Endothelial cell of umbilical vein (primary cell): ENCODE measurements at regions of chr22 and their contacts with region 1.

Region 1: DNA sequence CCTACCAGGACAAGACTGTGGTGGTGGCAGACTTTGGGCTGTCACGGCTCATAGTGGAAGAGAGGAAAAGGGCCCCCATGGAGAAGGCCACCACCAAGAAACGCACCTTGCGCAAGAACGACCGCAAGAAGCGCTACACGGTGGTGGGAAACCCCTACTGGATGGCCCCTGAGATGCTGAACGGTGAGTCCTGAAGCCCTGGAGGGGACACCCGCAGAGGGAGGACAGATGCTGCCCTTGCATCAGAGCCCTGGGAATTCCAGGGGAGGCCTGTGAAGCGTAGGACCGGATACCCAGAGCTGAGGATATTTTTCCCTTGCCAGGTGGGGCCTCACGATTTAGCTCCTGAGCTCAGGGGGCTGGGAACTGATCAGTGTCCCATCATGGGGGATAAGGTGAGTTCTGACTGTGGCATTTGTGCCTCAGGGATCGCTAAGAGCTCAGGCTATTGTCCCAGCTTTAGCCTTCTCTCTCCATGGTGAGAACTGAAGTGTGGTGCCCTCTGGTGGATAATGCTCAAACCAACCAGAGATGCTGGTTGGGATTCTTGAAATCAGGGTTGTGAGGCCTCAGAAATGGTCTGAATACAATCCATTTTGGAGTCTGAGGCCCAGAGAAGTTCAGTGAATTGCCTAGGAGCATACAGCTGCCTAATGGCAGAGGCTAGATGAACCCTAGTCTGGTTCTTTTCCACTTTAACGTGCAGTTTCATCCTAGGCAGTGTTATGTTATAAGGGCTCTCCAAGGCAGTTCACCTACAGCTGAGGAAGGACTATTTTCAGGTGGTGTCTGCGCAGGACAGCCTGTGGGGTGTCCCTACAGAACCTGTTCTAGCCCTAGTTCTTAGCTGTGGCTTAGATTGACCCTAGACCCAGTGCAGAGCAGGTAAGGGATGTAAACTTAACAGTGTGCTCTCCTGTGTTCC is 19.5 kb downstream of the PIK3IP1 start:
- DNase-seq: peak; percentile 67
- H3K4me3 ChIP-seq: no peak overlapping the region
- H3K27ac ChIP-seq: no peak overlapping the region
- H3K4me1 ChIP-seq: no peaks in the 10 kb centered on the region
- H3K27me3 ChIP-seq: no peaks in the 10 kb centered on the region
- CTCF ChIP-seq: peak; percentile 66 to 69
- POLR2A ChIP-seq: no peak

Region 2: DNA sequence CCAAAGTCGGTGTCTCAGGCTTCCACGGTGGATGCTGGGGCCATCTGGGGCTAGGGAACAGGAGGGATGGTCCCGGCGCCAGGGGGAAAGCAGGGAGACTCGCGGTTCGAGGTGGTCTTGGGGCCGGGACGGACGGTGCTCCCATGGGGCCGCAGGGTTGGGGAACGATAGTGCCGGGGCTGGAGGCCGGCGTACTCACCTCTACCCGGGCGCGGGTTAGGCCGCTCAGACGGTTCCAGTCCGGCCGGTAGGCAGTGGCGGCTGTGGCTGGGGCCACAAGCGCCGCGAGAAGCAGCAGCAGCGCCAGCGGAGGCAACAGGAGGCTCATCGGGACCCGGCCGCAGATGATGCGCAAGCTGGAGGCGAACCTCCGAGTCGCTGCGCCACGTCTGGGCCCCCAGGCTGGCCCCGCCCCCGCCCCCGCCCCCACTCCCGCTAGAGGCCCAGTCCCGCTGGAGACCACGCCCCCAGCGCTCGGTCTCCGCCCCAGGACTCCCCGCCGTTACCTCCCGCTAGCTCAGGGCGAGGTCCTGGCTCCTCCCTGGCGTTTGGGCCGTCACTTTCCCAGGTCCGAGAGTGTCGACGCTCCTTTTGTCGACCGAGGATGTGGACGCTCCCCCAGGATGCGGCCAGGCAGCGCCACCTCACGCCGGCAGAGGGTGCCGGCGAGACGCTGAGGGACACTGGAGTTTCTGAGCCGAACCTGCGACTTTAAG is 165.4 kb before region 1 on chr22 and contains the start of gene SELENOM:
- CTCF ChIA-PET with region 1: interaction called, 53 read pairs
- POLR2A ChIA-PET with region 1: no interaction called
- dilution Hi-C with region 1: no loop called
- intact Hi-C with region 1: loop called (anchors 1 kb)
- DNase-seq: peak; percentile 98
- H3K4me3 ChIP-seq: peak within 1 kb of the TSS; percentile 10 to 85 (median 60)
- H3K27ac ChIP-seq: peak within 1 kb of the TSS; percentile 64
- H3K4me1 ChIP-seq: peaks cover 11% of the 10 kb centered on the region
- H3K27me3 ChIP-seq: no peaks in the 10 kb centered on the region
- CTCF ChIP-seq: peak; percentile 97 to 99
- POLR2A ChIP-seq: peak; percentile 71
- total RNA-seq, gene SELENOM: 29.6 TPM in 2 replicates

Region 3: DNA sequence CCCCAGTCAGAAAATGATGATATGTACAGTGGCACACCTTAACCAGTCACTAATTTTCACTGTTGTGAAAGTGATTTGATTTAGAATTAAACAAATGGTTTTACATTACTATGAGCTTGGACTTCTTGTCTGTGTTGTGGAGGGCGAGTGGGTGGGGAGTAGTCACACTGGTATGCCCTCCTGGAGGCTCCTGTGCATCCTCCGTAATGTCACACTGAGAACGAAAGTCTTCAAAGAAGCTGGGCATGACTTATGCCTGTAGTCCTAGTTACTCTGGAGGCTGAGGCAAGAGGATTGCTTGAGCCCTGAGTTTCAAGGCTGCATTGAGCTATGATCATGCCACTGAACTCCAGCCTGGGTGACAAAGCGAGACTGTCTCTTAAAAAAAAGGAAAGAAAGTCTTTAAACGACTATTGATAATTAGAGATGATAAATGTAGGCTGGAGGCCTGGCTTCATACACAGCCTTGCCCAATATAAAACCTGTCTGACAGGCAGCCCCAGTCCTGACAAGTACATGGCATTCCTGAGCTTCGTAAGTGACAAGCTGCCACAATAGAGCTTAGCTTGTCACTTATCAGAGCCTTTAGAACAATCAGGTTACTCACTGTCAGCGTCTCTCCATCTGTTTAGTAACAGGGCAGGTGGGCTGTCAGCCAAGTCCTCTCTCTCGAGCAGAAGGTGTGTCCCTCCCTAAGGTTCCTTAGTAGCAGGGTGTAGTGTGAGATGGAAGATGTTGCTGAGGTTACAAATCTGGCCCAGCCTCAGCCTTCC is 65.7 kb before region 1 on chr22:
- CTCF ChIA-PET with region 1: interaction called, 66 read pairs
- POLR2A ChIA-PET with region 1: interaction called, 4 read pairs
- dilution Hi-C with region 1: no loop called
- intact Hi-C with region 1: loop called (anchors 1 kb)
- DNase-seq: no peak
- H3K4me3 ChIP-seq: no peak overlapping the region
- H3K27ac ChIP-seq: no peak overlapping the region
- H3K4me1 ChIP-seq: peaks cover 23% of the 10 kb centered on the region
- H3K27me3 ChIP-seq: no peaks in the 10 kb centered on the region
- CTCF ChIP-seq: no peak
- POLR2A ChIP-seq: no peak

Region 4: GRCh38 chr22:31230871-31231621 is 41.7 kb before region 1 on chr22:
- CTCF ChIA-PET with region 1: interaction called, 50 read pairs
- POLR2A ChIA-PET with region 1: no interaction called
- dilution Hi-C with region 1: no loop called
- intact Hi-C with region 1: loop called (anchors 2 kb)
- DNase-seq: peak; percentile 92
- H3K4me3 ChIP-seq: no peak overlapping the region
- H3K27ac ChIP-seq: peak overlapping the region; percentile 83
- H3K4me1 ChIP-seq: peaks cover 69% of the 10 kb centered on the region
- H3K27me3 ChIP-seq: no peaks in the 10 kb centered on the region
- CTCF ChIP-seq: peak; percentile 79 to 85
- POLR2A ChIP-seq: peak; percentile 42

Region 5: DNA sequence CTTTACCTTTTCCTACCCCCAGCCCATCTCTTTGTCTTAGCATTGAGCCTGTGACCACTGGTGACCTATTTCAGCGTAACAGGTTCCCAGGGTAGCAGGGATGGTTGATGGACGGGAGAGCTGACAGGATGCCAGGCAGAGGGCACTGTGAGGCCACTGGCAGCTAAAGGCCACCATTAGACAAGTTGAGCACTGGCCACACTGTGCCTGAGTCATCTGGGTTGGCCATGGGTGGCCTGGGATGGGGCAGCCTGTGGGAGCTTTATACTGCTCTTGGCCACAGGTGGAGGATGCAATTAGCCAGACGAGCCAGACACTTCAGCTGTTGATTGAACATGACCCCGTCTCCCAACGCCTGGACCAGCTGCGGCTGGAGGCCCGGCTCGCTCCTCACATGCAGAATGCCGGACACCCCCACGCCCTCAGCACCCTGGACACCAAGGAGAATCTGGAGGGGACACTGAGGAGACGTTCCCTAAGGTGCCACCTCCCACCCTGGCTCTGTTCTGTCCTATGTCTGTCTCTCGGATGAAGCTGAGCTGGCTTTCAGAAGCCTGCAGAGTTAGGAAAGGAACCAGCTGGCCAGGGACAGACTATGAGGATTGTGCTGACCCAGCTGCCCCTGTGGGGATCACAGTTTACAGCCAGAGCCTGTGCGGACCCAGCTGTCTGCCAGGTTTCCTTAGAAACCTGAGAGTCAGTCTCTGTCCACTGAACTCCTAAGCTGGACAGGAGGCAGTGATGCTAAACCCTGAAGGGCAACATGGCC is 10.3 kb before region 1 on chr22:
- CTCF ChIA-PET with region 1: interaction called, 40 read pairs
- POLR2A ChIA-PET with region 1: no interaction called
- dilution Hi-C with region 1: no loop called
- intact Hi-C with region 1: no loop called
- DNase-seq: no peak
- H3K4me3 ChIP-seq: no peak overlapping the region
- H3K27ac ChIP-seq: no peak overlapping the region
- H3K4me1 ChIP-seq: no peaks in the 10 kb centered on the region
- H3K27me3 ChIP-seq: no peaks in the 10 kb centered on the region
- CTCF ChIP-seq: no peak
- POLR2A ChIP-seq: no peak

Region 6: GRCh38 chr22:31295831-31296657 is 23.3 kb after region 1 on chr22:
- CTCF ChIA-PET with region 1: interaction called, 33 read pairs
- POLR2A ChIA-PET with region 1: no interaction called
- dilution Hi-C with region 1: no loop called
- intact Hi-C with region 1: no loop called
- DNase-seq: peak; percentile 70
- H3K4me3 ChIP-seq: no peak overlapping the region
- H3K27ac ChIP-seq: peak overlapping the region; percentile 50
- H3K4me1 ChIP-seq: peaks cover 30% of the 10 kb centered on the region
- H3K27me3 ChIP-seq: peaks cover 6 to 7% of the 10 kb centered on the region in 2 experiments
- CTCF ChIP-seq: no peak
- POLR2A ChIP-seq: no peak

Region 7: GRCh38 chr22:31350410-31350863 is 77.7 kb after region 1 on chr22:
- CTCF ChIA-PET with region 1: no interaction called
- POLR2A ChIA-PET with region 1: no interaction called
- dilution Hi-C with region 1: no loop called
- intact Hi-C with region 1: no loop called
- DNase-seq: no peak
- H3K4me3 ChIP-seq: no peak overlapping the region
- H3K27ac ChIP-seq: no peak overlapping the region
- H3K4me1 ChIP-seq: peaks cover 12% of the 10 kb centered on the region
- H3K27me3 ChIP-seq: peaks cover 2 to 5% of the 10 kb centered on the region in 2 experiments
- CTCF ChIP-seq: no peak
- POLR2A ChIP-seq: no peak

Region 8: DNA sequence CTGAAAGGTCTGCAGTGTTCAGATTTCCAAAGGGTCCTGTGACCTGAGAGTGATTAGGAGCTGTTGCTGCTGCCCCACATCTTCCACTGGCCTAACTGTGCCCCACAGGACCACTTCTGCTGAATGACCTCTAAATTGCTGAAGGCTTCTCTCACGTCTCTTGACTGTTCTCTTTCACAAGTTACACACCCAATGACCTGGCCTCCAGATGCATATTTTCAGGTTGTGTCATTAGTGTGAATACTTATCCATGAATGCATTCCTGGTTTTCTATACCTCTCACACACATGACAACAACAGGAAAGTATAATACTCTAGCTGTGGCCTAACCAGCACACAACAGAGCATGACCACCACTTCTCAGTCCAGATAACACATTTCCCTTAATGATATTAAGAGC is 461.7 kb after region 1 on chr22:
- CTCF ChIA-PET with region 1: no interaction called
- POLR2A ChIA-PET with region 1: no interaction called
- dilution Hi-C with region 1: no loop called
- intact Hi-C with region 1: no loop called
- DNase-seq: no peak
- H3K4me3 ChIP-seq: no peak overlapping the region
- H3K27ac ChIP-seq: no peak overlapping the region
- H3K4me1 ChIP-seq: no peaks in the 10 kb centered on the region
- H3K27me3 ChIP-seq: no peaks in the 10 kb centered on the region
- CTCF ChIP-seq: no peak
- POLR2A ChIP-seq: no peak